ENCODE measurements at regions of chr9 and their contacts with region 1.

Region 1: GRCh38 chr9:127450830-127451724 is at the starts of genes LRSAM1 and RPL12:
- DNase-seq: peak; percentile 96 to 97
- ATAC-seq: peak; percentile 72 to 77
- H3K4me3 ChIP-seq: peak within 1 kb of the TSS; percentile 98
- H3K27ac ChIP-seq: peak within 1 kb of the TSS; percentile 96 to 99
- H3K4me1 ChIP-seq: peaks cover 17% of the 10 kb centered on the region
- CTCF ChIP-seq: no peak
- EP300 ChIP-seq: no peak
- POLR2A ChIP-seq: peak; percentile 99
- RAD21 ChIP-seq: no peak
- polyA plus RNA-seq, gene LRSAM1: 5.1 and 6.4 TPM in 2 replicates
- polyA plus RNA-seq, gene RPL12: 1,891 and 2,198 TPM in 2 replicates

Region 2: DNA sequence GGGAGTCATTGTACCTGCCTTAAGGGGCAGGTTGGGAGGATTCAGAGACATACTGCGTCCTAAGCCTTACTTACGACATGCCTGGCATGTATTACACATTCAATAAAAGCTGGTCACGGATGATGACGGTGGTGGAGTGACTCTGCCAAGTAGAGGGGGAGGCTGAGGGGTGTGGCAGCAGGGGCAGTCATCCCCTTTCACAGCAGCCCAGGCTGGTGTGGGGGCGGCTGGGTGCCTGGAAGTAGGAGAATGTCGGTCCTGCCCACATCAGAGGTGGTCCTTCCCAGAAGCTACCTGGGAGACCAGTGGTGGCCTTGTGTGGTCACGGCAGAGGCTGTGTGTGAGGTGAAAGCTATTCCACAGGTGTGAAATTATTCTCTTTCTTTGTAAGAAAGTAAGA is 581.7 kb before region 1 on chr9:
- CTCF ChIA-PET with region 1: no interaction called
- POLR2A ChIA-PET with region 1: no interaction called
- DNase-seq: no peak
- ATAC-seq: no peak
- H3K4me3 ChIP-seq: no peak overlapping the region
- H3K27ac ChIP-seq: no peak overlapping the region
- H3K4me1 ChIP-seq: no peaks in the 10 kb centered on the region
- CTCF ChIP-seq: no peak
- EP300 ChIP-seq: no peak
- POLR2A ChIP-seq: no peak
- RAD21 ChIP-seq: no peak

Region 3: GRCh38 chr9:127214421-127215267 is 236.4 kb before region 1 on chr9:
- CTCF ChIA-PET with region 1: interaction called, 14 read pairs
- POLR2A ChIA-PET with region 1: no interaction called
- DNase-seq: peak; percentile 58 to 87
- ATAC-seq: peak; percentile 81 to 87
- H3K4me3 ChIP-seq: no peak overlapping the region
- H3K27ac ChIP-seq: no peak overlapping the region
- H3K4me1 ChIP-seq: no peaks in the 10 kb centered on the region
- CTCF ChIP-seq: peak; percentile 79
- EP300 ChIP-seq: no peak
- POLR2A ChIP-seq: no peak
- RAD21 ChIP-seq: peak; percentile 77 to 80

Region 4: DNA sequence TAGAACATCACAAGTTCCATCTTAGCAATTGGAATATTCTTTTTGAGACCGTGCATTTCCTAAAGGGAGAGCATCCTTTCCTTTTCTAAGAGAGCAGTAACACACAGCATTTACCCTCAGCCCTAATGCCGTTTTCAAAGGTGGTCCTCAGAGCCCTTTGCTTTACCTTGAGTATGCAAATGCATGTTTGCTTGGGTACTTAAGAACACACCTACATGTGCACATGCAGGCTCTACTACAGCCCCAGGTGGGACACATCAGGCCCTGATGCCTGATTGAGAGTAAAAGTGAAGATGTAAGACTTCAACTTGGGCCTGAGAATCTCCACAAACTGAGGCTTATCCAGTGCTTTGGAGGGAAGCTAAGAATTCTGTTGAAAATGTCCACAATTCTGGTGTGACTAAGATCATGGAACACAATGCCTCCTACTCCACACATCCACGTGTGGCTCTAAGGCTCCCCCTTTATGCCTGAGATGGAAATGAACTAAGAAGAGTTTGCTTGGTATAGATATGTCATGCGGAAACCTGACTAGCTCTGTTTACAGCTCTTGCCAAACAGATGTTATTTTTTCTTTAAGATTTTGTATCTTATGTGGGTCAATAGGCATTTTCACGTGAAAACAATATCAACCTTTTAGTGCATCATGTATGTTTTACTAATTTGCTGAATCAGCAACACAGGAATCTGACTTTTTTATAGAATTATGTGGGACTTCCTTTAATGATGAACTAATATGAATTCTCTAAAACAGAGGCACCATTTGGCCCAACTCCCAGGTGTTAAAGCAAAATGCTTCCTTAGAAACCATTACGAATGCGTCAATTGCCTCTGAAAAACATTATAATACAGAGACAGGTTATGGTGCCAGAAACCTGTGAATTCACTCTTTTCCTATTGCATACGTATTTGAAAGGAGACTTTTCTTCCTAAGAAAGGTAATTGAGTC is 103.0 kb before region 1 on chr9:
- CTCF ChIA-PET with region 1: no interaction called
- POLR2A ChIA-PET with region 1: no interaction called
- DNase-seq: peak; percentile 55 to 71
- ATAC-seq: peak; percentile 94 to 95
- H3K4me3 ChIP-seq: no peak overlapping the region
- H3K27ac ChIP-seq: no peak overlapping the region; a peak in 1 of 6 replicates
- H3K4me1 ChIP-seq: peaks cover 4% of the 10 kb centered on the region; the same call in 1 of the 3 replicates
- CTCF ChIP-seq: peak; percentile 73
- EP300 ChIP-seq: no peak
- POLR2A ChIP-seq: no peak
- RAD21 ChIP-seq: peak; percentile 80 to 91

Region 5: GRCh38 chr9:127388037-127388855 is 62.8 kb before region 1 on chr9:
- CTCF ChIA-PET with region 1: no interaction called
- POLR2A ChIA-PET with region 1: interaction called, 10 read pairs
- DNase-seq: peak; percentile 82
- ATAC-seq: peak; percentile 96 to 97
- H3K4me3 ChIP-seq: no peak overlapping the region
- H3K27ac ChIP-seq: peak overlapping the region; percentile 88 to 94
- H3K4me1 ChIP-seq: peaks cover 35% of the 10 kb centered on the region
- CTCF ChIP-seq: no peak
- EP300 ChIP-seq: peak; percentile 68 to 85; a peak in 3 of 5 replicates
- POLR2A ChIP-seq: no peak
- RAD21 ChIP-seq: peak in 1 of 2 experiments; percentile 9; a peak in 1 of 5 replicates

Region 6: GRCh38 chr9:127423934-127424675 is 27.0 kb before region 1 on chr9 and contains the start of gene ZNF79:
- CTCF ChIA-PET with region 1: no interaction called
- POLR2A ChIA-PET with region 1: interaction called, 23 read pairs
- DNase-seq: peak; percentile 92 to 97
- ATAC-seq: peak; percentile 99 to 100
- H3K4me3 ChIP-seq: peak within 1 kb of the TSS; percentile 86
- H3K27ac ChIP-seq: peak within 1 kb of the TSS; percentile 77 to 93
- H3K4me1 ChIP-seq: peaks cover 10% of the 10 kb centered on the region; the same call in 2 of the 3 replicates
- CTCF ChIP-seq: no peak
- EP300 ChIP-seq: no peak
- POLR2A ChIP-seq: peak; percentile 74
- RAD21 ChIP-seq: no peak
- polyA plus RNA-seq, gene ZNF79: 5.7 and 7.4 TPM in 2 replicates